Posterior vena cava (tissue), 2 donors: ENCODE measurements at regions of chr5 and their contacts with region 1.

Region 1: GRCh38 chr5:683551-684481 is 9.3 kb downstream of the TPPP start:
- DNase-seq: peak; percentile 82

Region 2: DNA sequence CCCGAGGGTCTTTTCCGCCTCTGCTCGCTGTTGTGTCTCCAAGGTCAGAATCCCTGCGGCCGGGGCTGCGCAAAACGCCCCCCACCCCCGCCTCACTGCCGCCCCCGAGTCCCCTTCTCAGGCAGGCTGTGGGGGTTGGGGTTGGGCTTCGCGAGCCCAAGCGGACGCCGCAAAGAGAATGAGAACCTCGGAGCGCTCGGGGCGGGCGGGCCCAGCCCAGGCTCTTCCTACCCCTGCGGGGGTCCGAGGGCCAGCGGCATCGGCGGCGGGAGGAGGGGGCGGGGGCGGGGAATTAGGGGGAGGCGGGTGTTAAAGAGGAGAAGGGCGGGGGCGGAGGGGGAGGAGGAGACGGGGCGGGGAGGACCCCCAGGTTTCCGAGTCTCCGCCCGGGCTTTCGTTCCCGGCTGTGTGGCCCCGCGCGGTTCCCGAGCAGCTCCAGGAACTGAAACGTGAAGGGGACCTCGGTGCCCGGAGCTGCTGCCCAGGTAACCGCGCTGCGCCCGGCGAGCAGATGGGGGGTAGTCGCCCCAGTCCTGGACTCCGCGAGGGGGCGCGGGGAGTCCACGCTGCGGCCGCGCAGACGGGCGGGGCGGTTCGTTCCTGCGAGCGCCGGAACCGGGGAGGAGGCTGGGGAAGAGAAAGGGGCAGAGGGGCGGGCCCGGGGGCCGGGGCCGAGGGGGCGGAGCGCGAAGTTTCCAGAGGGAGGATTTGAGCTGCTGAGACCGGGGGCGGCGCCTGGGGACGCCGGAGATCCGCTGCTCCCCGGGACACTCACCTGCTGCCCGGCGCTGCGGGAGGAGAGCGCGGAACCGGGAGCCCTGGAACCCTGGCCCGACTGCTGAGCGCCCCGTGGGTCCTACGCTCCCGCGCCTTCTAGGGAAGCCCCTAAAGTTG is 630.3 kb before region 1 on chr5:
- intact Hi-C with region 1: no loop called
- DNase-seq: no peak

Region 3: DNA sequence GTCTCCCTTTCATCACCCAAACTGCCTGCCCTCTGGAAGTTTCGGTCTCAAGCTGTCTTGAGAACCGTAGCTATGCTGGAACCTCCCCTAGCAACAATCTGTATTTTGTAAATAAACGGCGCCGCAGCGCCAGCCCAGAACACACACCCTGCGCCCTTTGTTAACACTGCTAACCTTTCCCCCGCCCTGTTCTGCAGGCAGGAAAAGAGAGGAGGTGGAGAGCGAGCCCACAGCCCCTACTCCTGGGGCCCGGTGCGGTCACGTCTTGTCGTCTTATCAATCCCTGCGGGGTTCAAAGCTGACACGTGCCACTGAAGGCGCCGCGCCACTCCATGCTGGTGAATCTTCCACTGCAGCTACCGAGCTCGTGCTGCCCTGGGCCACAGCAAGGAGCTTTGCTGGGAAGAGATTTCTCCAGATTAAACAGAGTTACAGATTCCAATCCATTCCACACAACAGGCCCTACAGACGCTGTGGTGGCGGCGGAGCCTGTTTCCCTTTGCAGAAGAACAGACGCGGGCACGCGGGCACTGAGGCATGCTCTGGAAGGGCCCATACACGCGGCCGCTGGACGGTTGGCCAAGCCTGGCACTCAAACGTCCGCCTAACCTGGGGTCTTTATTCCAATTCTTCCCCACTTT is 75.4 kb after region 1 on chr5:
- intact Hi-C with region 1: no loop called
- DNase-seq: peak; percentile 96

Region 4: DNA sequence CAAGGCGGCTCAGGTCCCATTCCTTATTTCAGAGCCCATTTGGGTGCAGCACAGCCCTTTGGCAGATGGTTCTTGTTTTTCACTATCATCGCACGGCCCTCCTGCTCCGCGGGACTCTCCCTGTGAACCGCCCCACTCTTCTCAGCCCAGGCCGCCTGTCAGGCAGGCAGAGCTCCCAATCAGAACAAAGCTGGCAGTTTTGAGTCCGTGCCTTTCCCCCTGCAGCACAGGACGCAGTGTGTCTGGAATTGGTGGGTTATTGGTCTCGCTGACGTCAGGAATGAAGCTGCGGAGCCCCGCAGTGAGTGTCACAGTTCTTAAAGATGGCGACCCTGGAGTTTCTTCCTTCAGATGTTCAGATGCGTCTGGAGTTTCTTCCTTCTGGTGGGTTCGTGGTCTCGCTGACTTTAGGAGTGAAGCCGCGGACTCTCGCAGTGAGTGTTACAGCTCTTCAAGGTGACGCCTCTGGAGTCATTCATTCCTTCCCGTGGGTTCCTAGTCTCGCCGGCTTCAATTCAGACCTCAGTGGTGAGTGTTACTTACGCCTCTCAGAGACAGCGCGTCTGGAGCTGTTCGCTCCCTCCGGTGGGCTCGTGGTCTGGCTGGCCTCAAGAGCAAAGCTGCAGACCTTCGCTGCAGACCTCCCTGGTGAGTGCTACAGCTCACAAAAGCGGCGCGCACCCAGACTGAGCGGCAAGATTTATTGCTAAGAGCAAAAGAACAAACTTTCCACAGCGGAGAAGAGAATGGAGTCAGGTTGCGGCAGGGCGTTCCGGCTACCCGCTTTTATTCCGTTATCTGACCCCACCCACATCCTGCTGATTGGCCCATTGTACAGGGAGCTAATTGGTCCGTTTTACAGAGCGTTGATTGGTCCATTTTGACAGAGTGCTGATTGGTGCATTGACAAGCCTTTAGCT is 93.2 kb after region 1 on chr5:
- intact Hi-C with region 1: loop called in 1 of 2 experiments (anchors 2 kb)
- DNase-seq: peak; percentile 85

Region 5: GRCh38 chr5:1174122-1174936 is 490.5 kb after region 1 on chr5:
- intact Hi-C with region 1: no loop called
- DNase-seq: peak; percentile 90